Activated CD4-positive, alpha-beta T cell treated with anti-CD3 and anti-CD28 coated beads, Interleukin-2, amount 10 ng/mL, durations not matched to agents 24 days and 14 days (primary cell): ENCODE measurements at regions of chr15 and their contacts with region 1.

Region 1: DNA sequence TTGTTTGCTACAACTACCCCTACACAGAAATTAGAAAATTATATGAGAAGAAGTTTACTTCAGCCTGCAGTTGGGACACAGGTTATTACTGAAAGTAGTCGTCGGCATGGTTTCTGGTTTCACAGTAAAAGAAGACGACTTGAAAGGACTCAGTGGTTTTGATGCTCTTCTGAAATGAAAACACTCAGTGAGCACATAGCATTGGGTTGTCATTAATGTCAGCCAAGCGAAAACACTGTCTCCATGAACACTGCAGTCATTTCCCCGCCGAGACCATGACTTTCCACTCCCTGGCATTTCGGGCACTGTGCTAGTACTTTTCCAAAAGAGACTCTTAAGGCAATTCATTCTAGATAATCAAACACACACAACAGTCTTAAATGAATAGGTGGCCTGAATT is 69.2 kb upstream of the ICE2 start:
- DNase-seq: peak; percentile 87
- H3K4me3 Mint-ChIP-seq: peak overlapping the region; percentile 74
- H3K27ac Mint-ChIP-seq: peak overlapping the region; percentile 94
- H3K4me1 Mint-ChIP-seq: peaks cover 72% of the 10 kb centered on the region
- H3K27me3 Mint-ChIP-seq: no peaks in the 10 kb centered on the region

Region 2: DNA sequence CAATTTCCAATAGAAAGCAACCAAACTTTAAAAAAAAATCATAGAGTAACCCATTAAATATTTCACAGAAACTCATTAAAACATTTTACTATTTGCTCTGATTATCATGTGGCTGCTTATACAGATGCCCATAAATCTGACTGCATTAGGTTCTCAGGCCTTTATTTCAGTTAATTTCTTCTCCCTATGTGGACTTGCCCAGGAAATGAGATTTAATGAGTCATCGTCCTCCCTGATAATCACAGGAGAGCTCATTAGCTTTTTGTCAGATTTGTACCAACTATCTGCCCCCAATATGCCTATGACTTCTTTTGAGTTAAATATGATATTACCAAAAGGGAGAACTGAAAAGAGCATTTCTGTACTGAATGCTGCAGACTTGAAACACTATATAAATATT is 376.0 kb before region 1 on chr15:
- intact Hi-C with region 1: no loop called
- DNase-seq: no peak
- H3K4me3 Mint-ChIP-seq: no peak overlapping the region
- H3K27ac Mint-ChIP-seq: no peak overlapping the region
- H3K4me1 Mint-ChIP-seq: no peaks in the 10 kb centered on the region
- H3K27me3 Mint-ChIP-seq: peaks cover 22% of the 10 kb centered on the region

Region 3: GRCh38 chr15:60389261-60390077 is 158.6 kb before region 1 on chr15:
- intact Hi-C with region 1: loop called (anchors 2 kb)
- DNase-seq: peak; percentile 89
- H3K4me3 Mint-ChIP-seq: peak overlapping the region; percentile 37
- H3K27ac Mint-ChIP-seq: peak overlapping the region; percentile 51
- H3K4me1 Mint-ChIP-seq: peaks cover 64% of the 10 kb centered on the region
- H3K27me3 Mint-ChIP-seq: no peaks in the 10 kb centered on the region

Region 4: GRCh38 chr15:60478566-60479360 is 69.3 kb before region 1 on chr15 and contains the start of gene ICE2:
- intact Hi-C with region 1: loop called (anchors 5 kb)
- DNase-seq: peak; percentile 99
- H3K4me3 Mint-ChIP-seq: peak within 1 kb of the TSS; percentile 95
- H3K27ac Mint-ChIP-seq: peak within 1 kb of the TSS; percentile 99
- H3K4me1 Mint-ChIP-seq: peaks cover 37% of the 10 kb centered on the region
- H3K27me3 Mint-ChIP-seq: no peaks in the 10 kb centered on the region
- total RNA-seq, gene ICE2: 55.4 and 62.6 TPM in 2 replicates

Region 5: GRCh38 chr15:60520825-60521368 is 27.2 kb before region 1 on chr15:
- intact Hi-C with region 1: loop called (anchors 1 kb)
- DNase-seq: peak; percentile 93
- H3K4me3 Mint-ChIP-seq: peak overlapping the region; percentile 8
- H3K27ac Mint-ChIP-seq: peak overlapping the region; percentile 59
- H3K4me1 Mint-ChIP-seq: peaks cover 36% of the 10 kb centered on the region
- H3K27me3 Mint-ChIP-seq: no peaks in the 10 kb centered on the region

Region 6: DNA sequence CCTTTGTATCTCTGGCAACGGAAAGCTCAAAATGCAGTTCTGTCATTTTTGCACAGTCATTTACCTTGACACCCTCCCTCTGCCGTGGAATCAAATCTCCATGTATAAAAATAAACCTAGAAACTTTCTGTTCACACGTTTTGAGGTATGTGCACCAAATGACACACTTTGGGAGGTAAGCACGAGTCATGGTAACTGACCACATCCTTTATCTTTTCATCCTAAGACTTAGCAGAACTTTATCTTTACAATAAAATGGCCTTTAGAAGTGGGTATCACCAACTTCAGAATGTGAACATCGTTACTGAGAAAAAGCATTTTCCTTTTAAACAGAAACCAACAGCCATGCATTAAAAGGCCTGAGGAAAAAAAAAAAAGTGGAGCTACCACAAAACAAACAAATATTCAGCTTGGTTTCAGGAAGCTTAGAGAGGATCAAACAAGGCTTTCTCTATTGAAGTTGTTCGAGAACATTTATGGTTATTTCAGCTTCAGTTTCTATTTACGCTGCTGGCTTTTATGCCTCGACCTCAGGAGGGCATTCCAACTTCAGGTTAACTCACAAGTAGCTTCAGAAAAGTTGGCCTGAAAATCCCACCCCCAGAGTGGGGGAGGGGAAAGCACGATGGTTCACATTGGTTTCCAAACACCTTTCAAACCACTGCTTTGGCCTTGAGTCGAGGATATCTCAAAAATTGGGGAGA is 101.9 kb after region 1 on chr15:
- intact Hi-C with region 1: loop called (anchors 5 kb)
- DNase-seq: peak; percentile 86
- H3K4me3 Mint-ChIP-seq: peak overlapping the region; percentile 75
- H3K27ac Mint-ChIP-seq: peak overlapping the region; percentile 86
- H3K4me1 Mint-ChIP-seq: peaks cover 44% of the 10 kb centered on the region
- H3K27me3 Mint-ChIP-seq: no peaks in the 10 kb centered on the region

Region 7: GRCh38 chr15:60899322-60899966 is 351.3 kb after region 1 on chr15:
- intact Hi-C with region 1: loop called (anchors 1 kb)
- DNase-seq: peak; percentile 80
- H3K4me3 Mint-ChIP-seq: peak overlapping the region; percentile 43
- H3K27ac Mint-ChIP-seq: peak overlapping the region; percentile 82
- H3K4me1 Mint-ChIP-seq: peaks cover 49% of the 10 kb centered on the region
- H3K27me3 Mint-ChIP-seq: peaks cover 4% of the 10 kb centered on the region